Prostate gland (tissue), 2 donors: ENCODE measurements at regions of chrX and their contacts with region 1.

Region 1: DNA sequence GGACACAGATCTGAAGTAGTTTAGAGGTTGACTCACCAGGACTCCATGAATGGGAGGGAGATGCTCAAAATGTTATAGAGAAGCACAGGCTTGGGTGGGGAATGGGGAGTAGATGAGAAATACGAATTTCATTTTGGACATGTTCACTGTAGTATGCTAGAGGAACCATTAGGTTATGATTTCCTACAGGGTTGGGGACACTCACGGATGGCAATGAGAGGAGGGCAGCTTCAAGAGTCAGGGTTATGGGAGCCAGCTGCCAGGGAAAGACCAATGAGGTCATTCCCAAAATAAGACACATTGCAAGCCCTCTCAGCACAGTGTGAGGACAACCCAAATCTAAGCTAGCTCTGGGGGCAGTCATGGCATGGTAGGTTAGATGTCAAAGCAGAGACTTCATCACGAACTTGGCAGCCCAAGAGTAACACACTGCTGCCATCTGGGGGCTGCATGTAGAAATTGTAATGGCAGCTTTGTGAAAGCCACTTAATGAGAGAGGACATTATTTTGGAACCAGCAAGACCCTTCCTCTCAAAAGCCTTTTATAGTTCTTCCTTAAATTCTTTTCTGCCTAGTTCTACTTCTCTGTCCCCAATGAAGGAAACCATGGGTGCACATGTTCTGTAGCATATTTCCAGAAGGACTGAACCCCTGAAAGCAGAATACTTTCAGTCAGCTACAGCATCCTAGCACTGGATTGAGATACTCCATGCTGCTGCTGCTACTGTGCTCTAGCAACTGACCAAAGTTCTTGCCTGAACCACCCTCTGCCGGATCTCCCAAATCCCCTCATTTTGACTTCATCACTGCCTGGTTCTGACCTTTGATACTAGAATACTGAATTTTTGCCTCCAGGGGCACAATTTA is 16.2 kb upstream of the ZCCHC12 start:
- DNase-seq: peak; percentile 14
- H3K4me3 ChIP-seq: no peak overlapping the region
- H3K27ac ChIP-seq: no peak overlapping the region
- H3K4me1 ChIP-seq: no peaks in the 10 kb centered on the region
- H3K27me3 ChIP-seq: no peaks in the 10 kb centered on the region
- CTCF ChIP-seq: peak in 3 of 4 experiments; percentile 57 to 73 (median 68)
- POLR2A ChIP-seq: no peak

Region 2: GRCh38 chrX:118644378-118644777 is 163.0 kb before region 1 on chrX:
- intact Hi-C with region 1: loop called (anchors 5 kb)
- DNase-seq: peak; percentile 4
- H3K4me3 ChIP-seq: no peak overlapping the region
- H3K27ac ChIP-seq: no peak overlapping the region
- H3K4me1 ChIP-seq: no peaks in the 10 kb centered on the region
- H3K27me3 ChIP-seq: no peaks in the 10 kb centered on the region
- CTCF ChIP-seq: peak in 3 of 4 experiments; percentile 23 to 60 (median 52)
- POLR2A ChIP-seq: no peak

Region 3: DNA sequence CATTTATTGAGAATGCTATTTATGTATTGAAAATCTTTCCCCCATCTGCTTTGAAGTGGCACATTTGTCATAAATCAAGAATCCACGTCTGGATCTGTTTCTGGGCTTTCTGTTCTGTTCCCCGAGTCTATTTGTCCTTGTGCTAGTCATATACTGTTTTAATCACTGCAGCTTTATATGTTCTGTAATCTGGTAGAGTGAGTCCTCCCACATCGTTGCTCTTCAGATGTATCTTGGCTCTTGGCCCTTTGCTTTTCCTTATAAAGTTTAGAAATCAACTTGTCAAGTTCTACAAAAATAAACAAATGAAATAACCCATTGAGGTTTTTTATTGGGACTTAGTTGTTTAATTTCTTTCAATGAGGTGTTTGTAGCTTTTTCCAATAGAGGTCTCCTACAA is 196.1 kb after region 1 on chrX:
- intact Hi-C with region 1: no loop called
- DNase-seq: peak; percentile 27
- H3K4me3 ChIP-seq: no peak overlapping the region
- H3K27ac ChIP-seq: no peak overlapping the region
- H3K4me1 ChIP-seq: no peaks in the 10 kb centered on the region
- H3K27me3 ChIP-seq: no peaks in the 10 kb centered on the region
- CTCF ChIP-seq: no peak
- POLR2A ChIP-seq: no peak